ENCODE measurements at regions of chr14 and their contacts with region 1.

Region 1: DNA sequence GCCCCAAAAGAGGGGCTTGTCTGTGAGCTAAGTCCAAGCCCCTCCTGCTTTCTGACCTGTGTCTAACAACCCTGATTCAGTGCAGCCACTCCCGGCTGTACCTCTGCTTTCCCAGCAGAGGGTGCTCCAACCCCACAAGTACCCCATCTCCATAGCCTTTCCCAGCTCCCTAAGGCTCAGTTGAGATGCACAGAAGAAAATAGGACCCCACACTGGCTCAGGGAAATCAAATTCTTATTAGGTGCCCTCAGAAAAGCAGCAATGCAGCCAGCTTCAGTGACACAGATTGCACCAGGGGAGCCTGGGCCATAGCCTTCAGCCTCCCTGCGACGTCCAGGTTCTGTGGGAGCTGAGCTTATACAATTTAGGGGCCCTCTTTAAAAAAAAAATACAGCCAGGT is 49.9 kb downstream of the LRRC74A start:
- DNase-seq: peak; percentile 78 to 87
- H3K4me3 ChIP-seq: no peak overlapping the region
- H3K27ac ChIP-seq: no peak overlapping the region
- H3K4me1 ChIP-seq: no peaks in the 10 kb centered on the region
- H3K27me3 ChIP-seq: peaks cover 7% of the 10 kb centered on the region
- CTCF ChIP-seq: peak; percentile 100

Region 2: DNA sequence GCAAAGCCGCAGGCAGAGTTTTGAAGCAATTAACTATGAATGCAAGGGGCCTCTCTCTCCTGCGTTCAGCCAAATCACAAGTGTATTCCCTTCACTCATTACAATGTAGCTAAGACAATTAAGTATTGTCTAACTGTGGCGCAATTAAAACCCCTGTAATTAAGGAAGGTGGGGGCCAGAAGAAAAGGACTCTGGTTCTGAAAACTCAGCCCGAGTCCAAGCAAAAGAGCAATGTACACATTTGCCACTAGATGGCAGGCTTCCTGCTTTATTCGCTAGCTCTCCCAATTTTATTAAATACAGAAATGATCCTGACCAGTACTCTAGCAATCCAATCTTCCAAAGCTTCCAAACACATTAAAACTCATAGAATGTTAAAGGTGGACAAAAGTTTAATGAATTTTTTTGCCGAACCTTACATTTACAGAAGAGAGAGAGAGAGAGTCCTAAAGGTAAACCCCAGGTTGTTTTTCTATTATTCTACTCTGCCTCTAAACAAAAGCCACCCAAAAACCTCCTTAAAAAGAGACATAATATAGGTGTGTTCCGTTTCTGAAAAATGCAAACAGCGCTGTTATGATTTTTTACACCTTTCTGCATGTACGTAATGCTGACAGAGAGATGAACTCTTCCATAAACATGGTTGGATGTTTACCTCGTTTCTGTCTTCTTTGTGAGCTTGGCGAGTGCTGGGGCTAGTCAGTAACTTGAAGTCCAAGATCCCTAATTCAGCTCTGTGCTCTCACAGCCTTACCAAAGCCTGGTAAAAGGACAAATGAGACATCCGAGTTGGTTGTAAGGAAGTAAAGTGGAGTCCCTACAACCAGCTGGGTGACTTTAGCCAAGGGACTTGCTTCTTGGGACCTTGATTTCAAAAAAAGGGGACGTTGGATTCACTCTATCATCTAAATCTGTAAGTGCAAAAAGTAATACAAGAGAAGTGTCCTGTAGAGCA is 165.7 kb before region 1 on chr14:
- CTCF ChIA-PET with region 1: interaction called, 3 read pairs
- POLR2A ChIA-PET with region 1: no interaction called
- intact Hi-C with region 1: loop called (anchors 1 kb)
- DNase-seq: peak in 1 of 2 experiments; percentile 35
- H3K4me3 ChIP-seq: no peak overlapping the region
- H3K27ac ChIP-seq: no peak overlapping the region
- H3K4me1 ChIP-seq: no peaks in the 10 kb centered on the region
- H3K27me3 ChIP-seq: peaks cover 93% of the 10 kb centered on the region
- CTCF ChIP-seq: peak; percentile 96

Region 3: DNA sequence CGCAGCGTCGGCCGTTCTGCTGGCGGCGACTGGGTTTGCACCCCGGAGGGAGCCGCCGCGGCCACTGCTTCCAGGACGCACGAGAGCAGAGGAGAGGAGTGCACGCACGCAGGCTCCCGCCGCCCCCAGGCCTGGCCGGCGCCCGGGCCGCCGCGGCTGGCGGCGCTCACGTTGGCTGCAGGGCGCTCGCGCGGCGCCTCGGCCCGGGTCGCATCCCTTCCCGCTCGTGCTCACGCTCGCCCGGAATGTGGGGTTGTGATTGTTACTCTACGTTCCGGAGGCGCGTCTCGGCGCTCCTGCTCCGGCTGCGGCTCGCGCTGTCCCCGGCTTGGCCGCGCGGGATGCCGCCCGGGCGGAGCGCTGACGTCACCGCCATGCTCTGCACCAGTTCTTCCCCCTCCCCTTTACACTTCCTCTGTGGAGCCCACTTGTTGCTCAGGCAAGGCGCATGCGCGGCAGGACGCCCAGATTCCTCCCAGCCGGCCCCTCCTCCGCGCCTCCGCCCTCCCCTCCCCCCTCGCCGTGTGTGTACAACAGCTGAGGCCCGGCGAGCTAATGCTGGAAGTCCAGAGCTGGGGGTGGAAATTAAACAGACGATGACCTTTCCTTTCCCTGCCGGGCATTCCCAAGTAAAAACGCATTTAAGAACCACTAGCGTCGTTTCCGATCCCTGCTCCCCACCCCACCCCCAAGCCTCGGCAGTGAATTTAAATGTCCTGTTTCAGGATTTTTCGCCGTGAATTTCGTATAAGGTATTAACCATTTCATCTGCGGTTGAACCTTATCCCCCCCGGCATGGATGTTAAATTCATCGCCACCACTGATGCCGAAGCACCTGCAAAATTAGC is 152.5 kb after region 1 on chr14 and contains the start of gene IRF2BPL:
- CTCF ChIA-PET with region 1: interaction called, 6 read pairs
- POLR2A ChIA-PET with region 1: no interaction called
- intact Hi-C with region 1: loop called (anchors 1 kb)
- DNase-seq: peak; percentile 97 to 100
- H3K4me3 ChIP-seq: peak within 1 kb of the TSS; percentile 64
- H3K27ac ChIP-seq: peak within 1 kb of the TSS; percentile 88
- H3K4me1 ChIP-seq: peaks cover 54% of the 10 kb centered on the region
- H3K27me3 ChIP-seq: no peaks in the 10 kb centered on the region
- CTCF ChIP-seq: no peak
- total RNA-seq, gene IRF2BPL: 74.6 and 84.5 TPM in 2 replicates

Region 4: DNA sequence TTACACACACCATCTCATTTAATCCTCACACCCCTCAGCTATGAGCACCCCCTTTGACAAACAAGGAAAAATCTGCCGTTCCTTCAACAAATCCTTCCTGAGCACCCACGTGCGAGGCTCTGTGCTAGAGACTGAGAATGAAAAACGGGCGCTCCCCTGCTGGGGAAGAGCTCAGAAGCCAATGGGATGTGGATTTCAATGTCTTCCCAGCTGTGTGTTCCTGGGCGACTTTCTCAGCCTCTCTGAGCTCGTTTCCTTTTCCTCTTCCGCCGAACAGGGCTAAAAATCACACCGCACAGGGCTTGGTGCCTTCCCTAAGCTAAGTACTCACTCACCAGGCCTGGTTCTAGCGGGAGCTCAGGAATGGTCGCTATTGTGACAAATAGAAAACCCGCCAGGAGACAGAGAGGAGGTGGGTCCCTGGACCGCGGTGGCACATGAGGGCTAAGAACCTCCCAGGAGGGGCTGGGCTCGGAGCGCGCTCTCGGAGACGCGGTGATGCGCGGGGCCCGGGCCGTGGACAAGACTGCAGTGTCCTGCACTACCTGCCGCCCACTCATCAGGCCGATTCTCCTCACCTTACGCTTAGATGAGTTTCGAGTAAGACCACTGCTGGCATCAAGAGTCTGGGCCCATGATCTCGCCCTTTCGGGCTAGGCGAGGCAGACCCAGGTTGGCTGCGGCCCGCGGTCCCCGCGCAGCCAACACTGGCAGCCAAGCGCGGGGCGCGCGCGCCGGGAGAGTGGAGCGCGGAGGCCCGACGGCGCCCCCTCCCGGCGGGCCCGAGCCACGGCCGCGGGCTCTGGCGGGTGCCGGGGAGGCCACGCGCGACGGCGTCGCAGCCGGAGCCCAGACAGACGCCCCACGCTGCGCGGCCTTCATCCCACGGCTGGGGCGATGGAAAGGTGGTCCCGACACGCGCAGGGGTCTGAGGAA is 248.5 kb after region 1 on chr14:
- CTCF ChIA-PET with region 1: interaction called, 26 read pairs
- POLR2A ChIA-PET with region 1: no interaction called
- intact Hi-C with region 1: loop called (anchors 1 kb)
- DNase-seq: peak in 1 of 2 experiments; percentile 81
- H3K4me3 ChIP-seq: peak overlapping the region; percentile 31; the same call in 1 of the 2 replicates
- H3K27ac ChIP-seq: no peak overlapping the region
- H3K4me1 ChIP-seq: peaks cover 26% of the 10 kb centered on the region
- H3K27me3 ChIP-seq: peaks cover 51% of the 10 kb centered on the region
- CTCF ChIP-seq: peak; percentile 28; the same call in 1 of the 2 replicates

Region 5: GRCh38 chr14:77212943-77213678 is 337.0 kb after region 1 on chr14:
- CTCF ChIA-PET with region 1: interaction called, 5 read pairs
- POLR2A ChIA-PET with region 1: no interaction called
- intact Hi-C with region 1: loop called (anchors 1 kb)
- DNase-seq: peak; percentile 55 to 82
- H3K4me3 ChIP-seq: no peak overlapping the region
- H3K27ac ChIP-seq: no peak overlapping the region
- H3K4me1 ChIP-seq: no peaks in the 10 kb centered on the region
- H3K27me3 ChIP-seq: peaks cover 71% of the 10 kb centered on the region
- CTCF ChIP-seq: peak; percentile 90

Region 6: GRCh38 chr14:77457522-77458290 is 581.6 kb after region 1 on chr14 and contains the starts of genes AHSA1 and VIPAS39:
- CTCF ChIA-PET with region 1: interaction called, 3 read pairs
- POLR2A ChIA-PET with region 1: no interaction called
- intact Hi-C with region 1: loop called (anchors 5 kb)
- DNase-seq: peak; percentile 99 to 100
- H3K4me3 ChIP-seq: peak within 1 kb of the TSS; percentile 73
- H3K27ac ChIP-seq: peak within 1 kb of the TSS; percentile 80
- H3K4me1 ChIP-seq: peaks cover 20% of the 10 kb centered on the region
- H3K27me3 ChIP-seq: no peaks in the 10 kb centered on the region
- CTCF ChIP-seq: no peak
- total RNA-seq, gene AHSA1: 448 and 674 TPM in 2 replicates
- total RNA-seq, gene VIPAS39: 46.1 and 54.5 TPM in 2 replicates

Measured in PC-9 (cell line).